ENCODE measurements at regions of chr5 and their contacts with region 1.

Region 1: GRCh38 chr5:173123416-173123815 is 20.9 kb upstream of the BNIP1 start:
- DNase-seq: no peak
- ATAC-seq: no peak
- H3K4me3 ChIP-seq: no peak overlapping the region
- H3K27ac ChIP-seq: no peak overlapping the region
- H3K4me1 ChIP-seq: no peaks in the 10 kb centered on the region
- H3K27me3 ChIP-seq: no peaks in the 10 kb centered on the region
- CTCF ChIP-seq: no peak

Region 2: DNA sequence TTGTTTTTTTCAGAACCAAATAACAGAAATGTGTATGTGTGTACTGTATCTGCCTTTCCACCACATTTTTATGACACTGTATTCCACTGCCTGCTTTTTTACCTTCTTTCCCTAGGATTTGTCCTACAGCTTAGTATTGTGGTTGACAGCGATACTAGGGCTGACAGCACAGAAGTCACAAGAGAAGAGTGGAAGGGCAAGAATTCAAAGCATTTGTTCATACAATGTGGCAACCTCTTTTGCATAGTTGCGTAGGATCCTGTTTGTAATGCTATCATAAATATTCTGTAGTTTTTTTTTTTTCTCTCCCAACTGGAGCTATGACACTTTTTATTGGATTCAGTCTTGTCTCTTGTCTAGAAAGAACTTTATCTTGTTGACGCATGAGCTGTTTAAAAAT is 15.3 kb after region 1 on chr5:
- CTCF ChIA-PET with region 1: interaction called, 3 read pairs
- POLR2A ChIA-PET with region 1: interaction called, 10 read pairs
- in situ Hi-C with region 1: no loop called
- intact Hi-C with region 1: no loop called
- DNase-seq: no peak
- ATAC-seq: no peak
- H3K4me3 ChIP-seq: no peak overlapping the region
- H3K27ac ChIP-seq: no peak overlapping the region
- H3K4me1 ChIP-seq: peaks cover under 1% of the 10 kb centered on the region; the same call in 1 of the 2 replicates
- H3K27me3 ChIP-seq: no peaks in the 10 kb centered on the region
- CTCF ChIP-seq: no peak

Region 3: GRCh38 chr5:173271419-173271818 is 148.0 kb after region 1 on chr5:
- CTCF ChIA-PET with region 1: interaction called, 10 read pairs
- POLR2A ChIA-PET with region 1: no interaction called
- in situ Hi-C with region 1: no loop called
- intact Hi-C with region 1: no loop called
- DNase-seq: no peak
- ATAC-seq: no peak
- H3K4me3 ChIP-seq: no peak overlapping the region
- H3K27ac ChIP-seq: no peak overlapping the region
- H3K4me1 ChIP-seq: no peaks in the 10 kb centered on the region
- H3K27me3 ChIP-seq: no peaks in the 10 kb centered on the region; the same call in 1 of the 2 replicates
- CTCF ChIP-seq: no peak